ENCODE measurements at regions of chr5 and their contacts with region 1.

Region 1: DNA sequence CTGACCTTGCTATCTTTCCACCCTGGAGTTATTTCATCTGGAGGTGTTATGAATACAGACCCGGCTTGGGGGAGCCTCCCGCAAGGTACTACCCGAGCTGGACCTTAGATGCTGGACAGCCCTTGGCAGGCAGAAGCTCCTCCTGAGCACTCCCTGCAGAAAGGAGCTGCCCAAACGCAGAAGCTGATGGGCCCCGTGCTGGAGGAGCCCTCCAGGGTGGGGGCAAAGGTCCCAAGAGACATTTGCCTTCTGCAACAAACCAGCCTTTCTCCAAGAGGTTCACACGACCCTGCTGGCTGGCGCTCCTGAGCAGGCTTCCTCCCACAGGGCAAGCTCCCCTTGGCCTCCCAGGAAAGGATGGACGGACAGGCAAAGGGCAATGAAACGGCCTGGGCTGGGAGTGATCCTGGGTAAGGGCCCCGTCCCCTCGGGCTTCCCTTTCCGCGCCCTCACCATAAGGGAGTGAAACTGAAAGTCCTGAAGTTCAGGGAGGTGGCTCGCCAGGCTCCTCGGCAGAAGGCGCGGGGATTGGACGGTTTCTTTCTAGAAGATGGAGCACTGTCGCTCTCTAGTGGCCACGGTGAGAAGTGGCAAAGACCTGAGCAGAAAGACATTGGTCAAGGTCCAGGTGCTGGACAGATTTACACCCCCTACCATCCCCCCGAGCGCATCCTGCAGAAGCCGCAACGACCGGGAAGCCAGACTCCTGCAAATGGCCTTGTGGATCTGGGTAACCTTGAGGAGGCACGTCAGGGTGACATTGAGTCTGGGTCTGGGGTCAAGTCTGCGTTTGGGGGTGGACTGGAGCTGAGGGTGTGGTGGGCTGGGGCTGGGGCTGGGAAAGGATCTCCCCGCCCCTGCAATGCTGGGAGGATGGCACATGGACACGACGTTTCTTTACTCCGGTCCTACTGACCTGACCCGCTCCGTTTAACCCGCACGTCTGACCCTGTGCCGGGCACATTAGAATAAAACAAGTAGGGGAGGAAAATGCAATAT is 56.4 kb downstream of the NEURL1B start:
- DNase-seq: peak; percentile 85 to 92
- ATAC-seq: peak; percentile 58 to 86 (median 76)
- H3K4me3 ChIP-seq: peak overlapping the region; percentile 23 to 63 (median 58)
- H3K27ac ChIP-seq: peak overlapping the region; percentile 78 to 92 (median 86)
- H3K4me1 ChIP-seq: peaks cover 20 to 77% (median 60%) of the 10 kb centered on the region in 9 donors
- H3K27me3 ChIP-seq: peaks cover 0 to 5% (median 0%) of the 10 kb centered on the region in 7 donors
- CTCF ChIP-seq: peak; percentile 90 to 94 (median 92)

Region 2: DNA sequence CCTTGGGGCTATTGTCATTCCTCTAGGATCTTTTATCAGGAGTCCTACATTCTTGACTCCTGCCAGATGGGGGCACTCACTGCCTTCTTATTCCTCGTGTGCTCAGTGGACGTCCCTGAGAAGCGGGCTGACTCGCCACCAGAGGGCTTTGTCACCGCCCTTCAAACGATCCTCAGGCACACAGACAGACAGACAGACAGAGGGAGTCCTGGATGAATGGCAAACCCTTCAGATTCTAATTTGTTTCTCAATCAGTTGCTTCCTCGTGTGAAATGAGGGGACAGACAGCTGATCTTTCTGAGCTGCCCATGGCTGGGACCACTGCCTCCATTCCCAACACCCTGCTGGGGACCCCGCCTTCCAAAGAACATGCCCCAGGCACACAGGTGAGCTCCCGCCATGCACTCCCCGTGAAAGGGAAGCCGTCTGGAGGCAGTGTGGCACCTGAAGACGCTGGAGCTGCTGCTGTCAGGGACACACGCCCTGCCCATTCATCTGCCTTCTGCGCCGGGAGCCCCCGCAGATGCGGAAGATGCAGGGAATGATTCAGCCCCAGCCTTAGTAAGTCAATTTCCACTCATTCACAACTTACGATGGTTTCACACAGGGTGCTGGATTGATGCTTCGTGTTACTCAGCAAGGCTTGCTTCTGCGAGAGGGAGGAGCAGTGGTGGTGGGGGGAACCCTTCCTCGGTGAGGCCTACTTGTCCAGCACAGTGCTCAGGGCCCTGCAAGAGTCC is 218.2 kb before region 1 on chr5:
- intact Hi-C with region 1: loop called (anchors 1 to 2 kb)
- DNase-seq: peak; percentile 83 to 92
- ATAC-seq: peak; percentile 94 to 98 (median 96)
- H3K4me3 ChIP-seq: peak overlapping the region in 5 of 10 donors; percentile 21 to 41 (median 28)
- H3K27ac ChIP-seq: peak overlapping the region; percentile 17 to 87 (median 78)
- H3K4me1 ChIP-seq: peaks cover 5 to 43% (median 15%) of the 10 kb centered on the region in 9 donors
- H3K27me3 ChIP-seq: no peaks in the 10 kb centered on the region
- CTCF ChIP-seq: peak; percentile 81 to 95 (median 86)

Region 3: DNA sequence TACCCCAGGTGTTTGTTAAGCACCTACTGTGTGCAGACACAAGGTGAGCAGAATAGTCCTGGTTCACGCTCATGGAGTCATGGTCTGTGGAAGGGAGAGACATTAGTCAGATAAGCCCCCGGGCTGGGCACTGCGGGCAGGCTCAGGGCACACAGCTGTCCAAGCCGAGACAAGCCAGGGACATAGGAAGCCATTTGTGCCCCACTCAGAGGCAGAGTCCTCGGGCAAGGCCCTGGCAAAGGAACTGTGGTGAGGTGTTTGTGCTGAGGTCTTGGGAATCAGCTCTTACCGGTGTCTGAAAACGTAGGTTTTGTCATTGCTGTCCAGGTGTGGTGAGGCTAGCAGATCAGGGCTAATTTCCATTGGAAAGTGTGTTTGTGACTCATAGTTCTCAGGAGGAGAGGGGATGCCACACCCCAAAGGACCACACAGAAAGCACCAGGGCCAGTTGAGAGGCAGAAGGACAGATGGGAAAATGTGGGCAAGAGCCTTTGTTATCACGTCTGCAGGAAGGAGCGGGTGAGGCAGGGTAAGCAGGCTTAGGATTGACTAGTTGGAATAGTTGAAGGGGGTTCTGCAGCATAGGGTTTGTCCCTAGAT is 102.5 kb before region 1 on chr5:
- intact Hi-C with region 1: loop called in 2 of 10 experiments (anchors 10 kb)
- DNase-seq: no peak
- ATAC-seq: no peak
- H3K4me3 ChIP-seq: no peak overlapping the region
- H3K27ac ChIP-seq: peak overlapping the region in 2 of 10 donors; percentile 15 to 30
- H3K4me1 ChIP-seq: peaks cover 0 to 27% (median 11%) of the 10 kb centered on the region in 9 donors
- H3K27me3 ChIP-seq: no peaks in the 10 kb centered on the region
- CTCF ChIP-seq: no peak

Region 4: GRCh38 chr5:172640822-172641358 is 56.5 kb before region 1 on chr5 and contains the start of gene NEURL1B:
- intact Hi-C with region 1: loop called in 9 of 10 experiments (anchors 2 to 10 kb)
- DNase-seq: peak; percentile 81 to 87
- ATAC-seq: peak; percentile 74 to 93 (median 86)
- H3K4me3 ChIP-seq: peak within 1 kb of the TSS; percentile 72 to 99 (median 90)
- H3K27ac ChIP-seq: peak within 1 kb of the TSS; percentile 92 to 99 (median 98)
- H3K4me1 ChIP-seq: peaks cover 1 to 57% (median 35%) of the 10 kb centered on the region in 9 donors
- H3K27me3 ChIP-seq: peaks cover 0 to 30% (median 0%) of the 10 kb centered on the region in 7 donors
- CTCF ChIP-seq: peak in 4 of 9 donors; percentile 18 to 56 (median 48)
- total RNA-seq, gene NEURL1B: 14.4 to 45.8 (median 21.6) TPM

Region 5: GRCh38 chr5:172659909-172660628 is 37.4 kb before region 1 on chr5:
- intact Hi-C with region 1: loop called in 2 of 10 experiments (anchors 5 kb)
- DNase-seq: peak; percentile 90 to 93
- ATAC-seq: peak; percentile 88 to 93 (median 92)
- H3K4me3 ChIP-seq: peak overlapping the region in 2 of 10 donors; percentile 13 to 21
- H3K27ac ChIP-seq: peak overlapping the region; percentile 76 to 99 (median 91)
- H3K4me1 ChIP-seq: peaks cover 40 to 100% (median 77%) of the 10 kb centered on the region in 9 donors
- H3K27me3 ChIP-seq: no peaks in the 10 kb centered on the region
- CTCF ChIP-seq: peak in 4 of 9 donors; percentile 14 to 26 (median 21)

Region 6: GRCh38 chr5:172795318-172795977 is 98.0 kb after region 1 on chr5:
- intact Hi-C with region 1: no loop called
- DNase-seq: peak; percentile 93 to 96
- ATAC-seq: peak; percentile 93 to 97 (median 95)
- H3K4me3 ChIP-seq: no peak overlapping the region
- H3K27ac ChIP-seq: peak overlapping the region; percentile 19 to 95 (median 74)
- H3K4me1 ChIP-seq: peaks cover 6 to 84% (median 25%) of the 10 kb centered on the region in 9 donors
- H3K27me3 ChIP-seq: no peaks in the 10 kb centered on the region
- CTCF ChIP-seq: peak in 1 of 9 donors; percentile 6